Caco-2 (cell line): ENCODE measurements at regions of chr1 and their contacts with region 1.

Region 1: DNA sequence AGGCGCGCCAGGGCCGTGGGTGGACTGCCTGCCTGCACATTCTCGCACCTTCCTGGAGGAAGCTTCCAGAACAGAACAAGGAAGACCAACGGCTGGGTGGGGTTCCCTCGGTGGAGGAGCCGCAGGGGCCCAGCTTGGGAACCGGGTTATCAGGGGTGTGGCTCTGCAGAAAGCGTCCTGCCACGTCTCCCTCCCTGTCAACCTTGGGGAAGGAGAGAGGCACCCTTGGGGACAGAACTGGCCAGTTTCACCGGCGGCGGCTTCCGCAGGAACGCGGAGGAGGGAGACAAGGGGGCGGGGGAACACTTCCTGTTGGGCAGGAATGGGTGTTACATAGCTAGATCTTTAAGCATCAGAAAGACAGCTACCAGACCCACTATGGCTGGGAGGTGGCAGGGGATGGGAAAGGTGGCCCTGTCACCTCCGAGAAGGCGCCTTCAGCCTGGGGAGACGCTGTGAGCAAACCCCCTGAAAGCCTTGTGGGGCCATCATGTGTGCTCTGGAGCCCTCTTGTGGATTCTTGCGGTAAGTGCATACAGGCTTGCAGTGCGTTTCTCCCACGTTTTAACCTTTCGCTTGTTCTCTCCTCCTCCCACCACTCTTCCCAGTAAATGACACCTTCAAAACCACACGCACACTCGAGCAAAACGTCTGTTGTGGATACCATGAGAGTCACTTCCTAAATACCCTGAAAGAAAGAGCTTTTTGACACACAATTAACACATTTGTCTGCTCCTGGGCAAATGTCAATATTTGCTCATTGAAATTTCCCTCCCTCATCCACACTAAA is 3.8 kb upstream of the PLEKHA6 start:
- DNase-seq: peak; percentile 74 to 78
- H3K4me3 ChIP-seq: peak overlapping the region; percentile 26
- H3K4me3 Mint-ChIP-seq: peak overlapping the region; percentile 62
- H3K27ac Mint-ChIP-seq: peak overlapping the region; percentile 15
- H3K4me1 ChIP-seq: peaks cover 56% of the 10 kb centered on the region
- H3K4me1 Mint-ChIP-seq: peaks cover 16% of the 10 kb centered on the region
- H3K27me3 ChIP-seq: no peaks in the 10 kb centered on the region
- H3K27me3 Mint-ChIP-seq: no peaks in the 10 kb centered on the region
- CTCF ChIP-seq: peak; percentile 93 to 97

Region 2: DNA sequence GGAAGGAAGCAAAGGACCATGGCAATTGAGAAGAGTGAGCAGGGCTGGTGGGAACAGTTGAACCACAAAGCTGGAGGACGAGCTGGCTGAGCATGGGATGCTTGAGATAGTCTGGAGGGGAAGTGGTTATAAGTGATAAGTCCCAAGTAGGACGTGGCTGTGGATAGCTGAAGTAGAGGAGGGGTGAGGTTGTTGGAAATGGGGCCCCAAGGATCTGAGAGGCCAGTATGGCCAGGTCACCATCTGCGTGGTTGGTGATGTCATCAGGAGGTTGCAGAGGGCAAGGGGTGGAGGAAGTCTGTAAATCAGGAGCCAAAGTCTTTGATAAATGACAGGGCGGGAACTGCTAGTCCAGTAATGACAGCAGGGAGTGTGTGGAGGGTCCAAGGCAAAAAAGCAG is 186.4 kb before region 1 on chr1:
- CTCF ChIA-PET with region 1: no interaction called
- POLR2A ChIA-PET with region 1: no interaction called
- intact Hi-C with region 1: no loop called
- DNase-seq: no peak
- H3K4me3 ChIP-seq: no peak overlapping the region
- H3K4me3 Mint-ChIP-seq: no peak overlapping the region
- H3K27ac Mint-ChIP-seq: no peak overlapping the region
- H3K4me1 ChIP-seq: peaks cover 5% of the 10 kb centered on the region
- H3K4me1 Mint-ChIP-seq: peaks cover 4% of the 10 kb centered on the region
- H3K27me3 ChIP-seq: no peaks in the 10 kb centered on the region; the same call in 1 of the 2 replicates
- H3K27me3 Mint-ChIP-seq: no peaks in the 10 kb centered on the region
- CTCF ChIP-seq: no peak

Region 3: GRCh38 chr1:204213668-204214662 is 149.6 kb before region 1 on chr1 and contains the start of gene GOLT1A:
- CTCF ChIA-PET with region 1: interaction called, 41 read pairs
- POLR2A ChIA-PET with region 1: no interaction called
- intact Hi-C with region 1: loop called (anchors 1 kb)
- DNase-seq: peak; percentile 97
- H3K4me3 ChIP-seq: peak within 1 kb of the TSS; percentile 79
- H3K4me3 Mint-ChIP-seq: no peak within 1 kb of the TSS
- H3K27ac Mint-ChIP-seq: no peak within 1 kb of the TSS
- H3K4me1 ChIP-seq: peaks cover 12% of the 10 kb centered on the region; the same call in 1 of the 2 replicates
- H3K4me1 Mint-ChIP-seq: no peaks in the 10 kb centered on the region
- H3K27me3 ChIP-seq: no peaks in the 10 kb centered on the region
- H3K27me3 Mint-ChIP-seq: no peaks in the 10 kb centered on the region
- CTCF ChIP-seq: peak; percentile 65 to 73
- total RNA-seq, gene GOLT1A: 20.4 and 25.9 TPM in 2 replicates

Region 4: DNA sequence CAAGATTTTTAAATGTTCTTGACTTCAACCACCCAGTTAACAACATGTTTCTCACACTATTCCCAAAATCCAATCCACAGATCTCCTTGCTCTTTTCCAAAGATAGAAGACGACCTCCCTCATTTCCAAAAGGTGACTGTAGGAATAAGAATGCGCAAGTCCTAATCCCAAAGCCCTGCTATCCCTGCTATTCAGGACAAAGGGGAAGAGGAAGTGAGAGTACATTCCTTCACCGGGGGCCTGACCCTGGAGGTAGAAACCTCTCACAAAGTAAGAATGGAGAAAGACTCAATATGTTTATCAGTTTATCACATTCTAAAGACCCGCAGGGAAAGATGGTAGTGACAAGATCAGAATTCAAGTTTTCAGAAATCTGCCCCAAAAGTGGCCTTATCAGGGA is 59.5 kb before region 1 on chr1:
- CTCF ChIA-PET with region 1: no interaction called
- POLR2A ChIA-PET with region 1: no interaction called
- intact Hi-C with region 1: loop called (anchors 5 kb)
- DNase-seq: no peak
- H3K4me3 ChIP-seq: no peak overlapping the region
- H3K4me3 Mint-ChIP-seq: no peak overlapping the region
- H3K27ac Mint-ChIP-seq: no peak overlapping the region
- H3K4me1 ChIP-seq: peaks cover 24% of the 10 kb centered on the region
- H3K4me1 Mint-ChIP-seq: peaks cover 26% of the 10 kb centered on the region
- H3K27me3 ChIP-seq: no peaks in the 10 kb centered on the region
- H3K27me3 Mint-ChIP-seq: no peaks in the 10 kb centered on the region
- CTCF ChIP-seq: no peak

Region 5: GRCh38 chr1:204348722-204349121 is 14.8 kb before region 1 on chr1:
- CTCF ChIA-PET with region 1: interaction called, 3 read pairs
- POLR2A ChIA-PET with region 1: no interaction called
- intact Hi-C with region 1: loop called (anchors 1 kb)
- DNase-seq: peak; percentile 47 to 68
- H3K4me3 ChIP-seq: no peak overlapping the region
- H3K4me3 Mint-ChIP-seq: no peak overlapping the region
- H3K27ac Mint-ChIP-seq: peak overlapping the region; percentile 95
- H3K4me1 ChIP-seq: peaks cover 49% of the 10 kb centered on the region
- H3K4me1 Mint-ChIP-seq: peaks cover 35% of the 10 kb centered on the region
- H3K27me3 ChIP-seq: no peaks in the 10 kb centered on the region
- H3K27me3 Mint-ChIP-seq: no peaks in the 10 kb centered on the region
- CTCF ChIP-seq: no peak

Region 6: DNA sequence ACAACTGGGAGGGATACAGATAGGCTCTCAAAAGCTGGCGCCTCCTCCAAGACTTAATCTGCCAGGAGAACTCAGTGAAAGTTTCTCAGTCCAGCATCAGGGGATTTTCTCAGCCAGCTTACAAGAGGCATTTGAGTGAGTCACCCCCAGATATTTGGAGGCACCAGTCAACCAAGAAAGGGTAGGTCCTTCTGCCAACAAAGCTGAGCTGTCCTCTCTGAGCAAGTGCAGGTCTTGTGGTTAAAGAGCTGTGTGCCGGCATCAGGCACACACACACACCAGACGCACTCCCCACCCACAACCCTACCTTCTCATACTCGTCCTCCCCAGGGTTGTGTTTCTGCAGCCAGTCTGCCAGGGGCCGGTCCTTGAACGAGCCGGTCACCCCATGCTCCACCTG is 75.1 kb after region 1 on chr1:
- CTCF ChIA-PET with region 1: no interaction called
- POLR2A ChIA-PET with region 1: no interaction called
- intact Hi-C with region 1: no loop called
- DNase-seq: no peak
- H3K4me3 ChIP-seq: no peak overlapping the region
- H3K4me3 Mint-ChIP-seq: no peak overlapping the region
- H3K27ac Mint-ChIP-seq: no peak overlapping the region
- H3K4me1 ChIP-seq: no peaks in the 10 kb centered on the region
- H3K4me1 Mint-ChIP-seq: no peaks in the 10 kb centered on the region
- H3K27me3 ChIP-seq: no peaks in the 10 kb centered on the region
- H3K27me3 Mint-ChIP-seq: no peaks in the 10 kb centered on the region
- CTCF ChIP-seq: no peak